Aorta (tissue), 5 donors: ENCODE measurements at regions of chr5 and their contacts with region 1.

Region 1: GRCh38 chr5:178279725-178280438 is 47.3 kb upstream of the PHYKPL start:
- DNase-seq: peak; percentile 93 to 96
- ATAC-seq: peak; percentile 89
- H3K4me3 ChIP-seq: no peak overlapping the region
- H3K27ac ChIP-seq: no peak overlapping the region
- H3K4me1 ChIP-seq: no peaks in the 10 kb centered on the region
- H3K27me3 ChIP-seq: no peaks in the 10 kb centered on the region

Region 2: GRCh38 chr5:178551059-178551458 is 271.2 kb after region 1 on chr5:
- intact Hi-C with region 1: loop called (anchors 2 to 10 kb)
- DNase-seq: no peak
- ATAC-seq: no peak
- H3K4me3 ChIP-seq: no peak overlapping the region
- H3K27ac ChIP-seq: no peak overlapping the region
- H3K4me1 ChIP-seq: no peaks in the 10 kb centered on the region
- H3K27me3 ChIP-seq: no peaks in the 10 kb centered on the region

Region 3: DNA sequence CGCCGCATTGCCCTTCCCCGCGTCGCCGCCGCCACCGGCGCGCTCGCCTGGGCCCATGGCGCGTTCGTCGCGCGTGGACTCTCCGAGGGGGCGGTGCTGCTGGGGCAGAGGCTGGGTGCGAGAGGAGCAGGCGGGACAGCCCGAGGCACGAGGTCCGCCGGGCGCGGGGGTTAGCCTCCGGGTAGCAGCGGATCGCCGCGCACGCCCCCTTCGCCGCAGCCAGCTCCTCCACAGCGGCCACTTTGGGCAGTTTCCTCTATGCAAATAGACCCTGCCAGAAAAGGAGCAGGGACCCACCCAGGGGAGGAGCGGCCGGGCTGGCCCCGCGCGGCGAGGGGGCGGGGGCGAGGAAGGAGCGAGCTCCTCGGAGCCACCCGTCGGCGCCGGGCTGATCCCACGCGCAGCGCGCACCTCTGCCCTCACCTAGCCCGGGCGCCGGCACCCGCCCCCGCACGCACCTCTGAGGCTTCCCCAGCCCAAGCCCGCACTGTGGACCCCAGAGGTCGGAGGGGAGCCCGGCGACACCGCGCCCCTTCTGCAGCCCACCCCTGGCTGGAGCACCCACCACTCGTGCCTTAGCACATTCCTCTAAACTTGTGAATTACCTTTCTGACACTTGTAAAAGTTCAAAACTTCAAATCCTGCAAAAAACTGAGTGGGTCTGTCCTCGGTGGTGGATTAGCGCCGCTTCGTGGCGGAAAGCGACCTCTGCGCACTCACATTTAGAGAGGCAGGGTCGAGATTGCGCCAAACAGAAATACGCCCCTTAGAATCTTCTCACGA is 310.4 kb after region 1 on chr5 and contains the start of gene COL23A1:
- intact Hi-C with region 1: loop called in 1 of 2 experiments (anchors 5 kb)
- DNase-seq: peak; percentile 78 to 86
- ATAC-seq: peak; percentile 67
- H3K4me3 ChIP-seq: peak within 1 kb of the TSS; percentile 6 to 43
- H3K27ac ChIP-seq: peak within 1 kb of the TSS in 1 of 2 donors; percentile 22
- H3K4me1 ChIP-seq: no peaks in the 10 kb centered on the region
- H3K27me3 ChIP-seq: no peaks in the 10 kb centered on the region
- total RNA-seq, gene COL23A1: 0.36 to 1.5 TPM

Region 4: GRCh38 chr5:178757049-178757809 is 477.3 kb after region 1 on chr5:
- intact Hi-C with region 1: no loop called
- DNase-seq: no peak
- ATAC-seq: no peak
- H3K4me3 ChIP-seq: no peak overlapping the region
- H3K27ac ChIP-seq: no peak overlapping the region
- H3K4me1 ChIP-seq: no peaks in the 10 kb centered on the region
- H3K27me3 ChIP-seq: no peaks in the 10 kb centered on the region

Region 5: DNA sequence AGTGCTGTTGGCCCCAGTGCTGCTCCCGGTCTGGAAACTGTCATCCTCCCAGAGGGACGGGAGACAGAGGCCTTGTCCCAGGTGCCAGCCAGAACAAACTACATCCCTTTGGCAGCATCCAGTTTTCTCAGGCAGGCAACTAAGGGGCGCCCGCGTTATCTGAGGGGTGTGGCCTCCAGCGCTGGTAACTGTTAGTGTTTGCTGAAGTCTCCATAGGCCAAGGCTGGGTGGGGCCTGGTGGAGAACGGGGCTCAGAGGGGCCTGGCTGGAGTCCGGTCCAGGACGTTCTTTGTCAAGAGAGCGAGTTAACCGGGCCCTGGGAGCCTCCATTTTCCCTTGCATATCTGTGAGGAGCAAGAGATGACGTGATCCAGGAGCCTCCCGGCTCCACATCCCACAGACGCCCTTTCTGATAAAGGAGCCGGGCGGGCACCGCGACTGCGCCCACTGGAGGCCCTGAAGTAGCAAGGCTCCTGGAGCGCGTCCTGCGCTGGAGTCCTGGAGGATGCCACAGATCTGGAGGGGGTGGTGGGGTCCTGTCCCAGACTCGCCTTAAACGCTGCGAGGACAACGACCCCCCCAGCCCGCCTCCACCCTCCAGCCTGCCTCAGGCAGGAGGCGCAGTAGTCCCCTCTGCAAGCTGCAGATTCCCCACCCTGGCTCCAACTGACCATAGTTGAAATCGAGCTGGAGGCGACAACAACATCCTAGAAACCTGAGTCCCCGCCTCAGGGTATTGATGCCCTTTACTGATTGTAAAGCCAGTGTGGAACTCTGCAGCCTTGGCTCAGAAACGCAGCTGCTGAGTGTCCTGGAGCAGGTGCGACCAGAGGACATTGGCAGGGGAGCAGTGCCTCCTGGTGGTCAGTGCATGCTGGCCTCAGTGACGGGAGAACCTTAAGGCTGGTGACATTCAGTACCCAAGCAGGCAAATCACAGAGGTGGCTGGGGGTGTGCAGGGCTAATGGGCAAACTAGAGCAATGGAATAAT is 559.1 kb after region 1 on chr5:
- intact Hi-C with region 1: loop called in 1 of 2 experiments (anchors 2 kb)
- DNase-seq: peak; percentile 75 to 84
- ATAC-seq: peak; percentile 56
- H3K4me3 ChIP-seq: no peak overlapping the region
- H3K27ac ChIP-seq: no peak overlapping the region
- H3K4me1 ChIP-seq: no peaks in the 10 kb centered on the region
- H3K27me3 ChIP-seq: no peaks in the 10 kb centered on the region

Region 6: DNA sequence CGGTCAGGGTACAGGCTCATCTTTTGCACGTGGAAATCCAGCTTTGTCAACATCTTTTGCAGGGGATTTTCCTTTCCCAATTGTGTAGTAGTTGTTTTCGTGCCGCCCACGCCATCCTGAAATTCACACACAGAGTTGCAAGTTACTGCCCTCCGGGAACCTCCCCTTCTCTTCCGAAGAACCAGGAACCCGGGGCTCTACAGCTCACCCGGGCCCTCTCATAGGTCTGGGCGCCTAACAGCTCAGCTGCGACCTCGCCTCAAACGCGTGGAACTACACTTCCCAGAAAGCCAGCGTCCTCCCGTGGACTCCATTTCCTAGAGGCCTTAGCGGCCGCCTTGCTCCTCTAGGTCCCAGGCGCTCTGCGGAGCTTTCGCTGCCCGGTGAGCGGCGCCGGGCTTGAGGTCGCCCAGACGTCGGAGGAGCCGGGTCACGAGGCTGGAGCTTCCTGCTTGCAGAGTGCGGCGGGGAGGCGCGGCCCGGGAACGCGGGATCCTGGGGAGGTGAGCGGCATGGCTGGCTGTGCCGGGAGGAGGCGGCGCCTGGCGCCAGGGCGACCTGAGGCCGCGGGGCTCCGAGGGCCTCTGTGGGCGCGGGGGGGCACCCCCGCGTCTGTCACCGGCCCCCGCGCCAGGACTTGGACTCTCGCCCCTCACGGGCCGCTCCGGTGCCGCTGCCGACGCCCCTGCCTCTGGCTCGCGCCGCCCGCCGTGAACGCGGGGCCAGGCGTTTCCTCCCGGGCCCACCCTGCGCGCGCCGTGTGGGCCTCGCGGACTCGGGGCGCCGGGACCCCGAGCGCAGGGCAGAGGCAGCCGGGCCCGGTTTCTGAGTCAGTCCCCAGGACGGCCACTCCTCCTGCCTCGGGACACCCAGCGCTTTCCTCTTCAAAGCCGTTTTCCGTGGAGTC is 580.0 kb after region 1 on chr5 and contains the start of gene ZNF354B:
- intact Hi-C with region 1: loop called in 1 of 2 experiments (anchors 10 kb)
- DNase-seq: peak; percentile 94 to 95
- ATAC-seq: peak; percentile 95
- H3K4me3 ChIP-seq: peak within 1 kb of the TSS; percentile 42 to 86
- H3K27ac ChIP-seq: peak within 1 kb of the TSS in 1 of 2 donors; percentile 35
- H3K4me1 ChIP-seq: no peaks in the 10 kb centered on the region
- H3K27me3 ChIP-seq: no peaks in the 10 kb centered on the region
- total RNA-seq, gene ZNF354B: 14.4 to 22.9 TPM